ENCODE measurements at regions of chr10 and their contacts with region 1.

Region 1: GRCh38 chr10:80699602-80700039 is 161.9 kb downstream of the SH2D4B start:
- DNase-seq: peak; percentile 38 to 54 (median 41)
- H3K4me3 ChIP-seq: no peak overlapping the region
- H3K4me3 Mint-ChIP-seq: no peak overlapping the region
- H3K27ac ChIP-seq: no peak overlapping the region
- H3K27ac Mint-ChIP-seq: no peak overlapping the region
- H3K4me1 ChIP-seq: no peaks in the 10 kb centered on the region
- H3K4me1 Mint-ChIP-seq: peaks cover 0 to 5% (median 0%) of the 10 kb centered on the region in 4 donors
- H3K27me3 ChIP-seq: no peaks in the 10 kb centered on the region
- H3K27me3 Mint-ChIP-seq: peaks cover 2 to 3% of the 10 kb centered on the region in 2 donors

Region 2: DNA sequence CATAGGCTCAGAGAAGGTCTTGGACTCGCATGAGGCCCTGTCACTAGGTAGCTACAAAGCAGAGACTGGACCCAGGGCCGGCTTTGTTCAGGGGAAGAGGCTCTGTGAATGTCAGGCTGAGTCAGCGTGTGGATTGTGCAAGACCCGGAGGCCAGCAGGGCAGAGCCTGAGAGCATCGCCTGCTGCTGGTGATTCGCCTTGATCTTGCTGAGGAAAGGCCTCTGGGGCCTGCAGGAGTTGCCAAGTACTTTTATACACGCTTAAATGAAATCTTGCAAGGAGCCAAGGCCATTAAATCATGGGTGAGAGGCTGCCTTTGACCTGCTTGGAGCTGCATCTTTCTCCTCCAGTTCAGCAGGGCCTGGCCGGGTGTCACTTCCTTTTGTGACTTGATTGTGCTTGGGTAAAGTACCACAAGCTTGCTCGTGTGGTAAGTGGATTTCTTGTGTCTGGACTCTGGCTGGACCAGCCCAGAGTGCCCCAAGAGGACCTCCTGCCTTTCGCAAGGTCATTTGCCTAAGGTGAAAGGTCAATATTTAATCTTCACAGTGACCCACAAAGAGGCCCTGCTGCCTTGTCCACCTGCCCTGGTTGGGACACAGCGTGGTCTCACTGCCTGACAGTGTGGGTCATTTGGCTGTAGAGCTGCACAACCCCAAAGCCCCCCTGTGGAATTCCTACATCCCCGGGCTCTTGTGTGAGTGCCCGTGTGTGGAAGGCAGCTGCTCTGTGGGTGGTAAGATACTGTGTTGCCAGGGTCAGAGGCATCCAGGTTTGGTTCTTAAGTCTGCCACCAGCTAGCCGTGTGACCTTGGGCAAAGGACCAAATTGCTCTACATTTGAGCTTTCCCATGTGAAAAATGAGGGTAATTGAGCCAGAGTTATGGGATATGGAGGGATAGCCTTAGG is 200.5 kb before region 1 on chr10:
- CTCF ChIA-PET with region 1: no interaction called
- POLR2A ChIA-PET with region 1: no interaction called
- intact Hi-C with region 1: no loop called
- DNase-seq: peak in 1 of 5 donors; percentile 74
- H3K4me3 ChIP-seq: peak overlapping the region; percentile 1 to 22
- H3K4me3 Mint-ChIP-seq: peak overlapping the region; percentile 48 to 92 (median 81)
- H3K27ac ChIP-seq: peak overlapping the region; percentile 62
- H3K27ac Mint-ChIP-seq: peak overlapping the region; percentile 83 to 97 (median 95)
- H3K4me1 ChIP-seq: peaks cover 100% of the 10 kb centered on the region
- H3K4me1 Mint-ChIP-seq: peaks cover 90 to 100% (median 95%) of the 10 kb centered on the region in 4 donors
- H3K27me3 ChIP-seq: no peaks in the 10 kb centered on the region
- H3K27me3 Mint-ChIP-seq: no peaks in the 10 kb centered on the region

Region 3: DNA sequence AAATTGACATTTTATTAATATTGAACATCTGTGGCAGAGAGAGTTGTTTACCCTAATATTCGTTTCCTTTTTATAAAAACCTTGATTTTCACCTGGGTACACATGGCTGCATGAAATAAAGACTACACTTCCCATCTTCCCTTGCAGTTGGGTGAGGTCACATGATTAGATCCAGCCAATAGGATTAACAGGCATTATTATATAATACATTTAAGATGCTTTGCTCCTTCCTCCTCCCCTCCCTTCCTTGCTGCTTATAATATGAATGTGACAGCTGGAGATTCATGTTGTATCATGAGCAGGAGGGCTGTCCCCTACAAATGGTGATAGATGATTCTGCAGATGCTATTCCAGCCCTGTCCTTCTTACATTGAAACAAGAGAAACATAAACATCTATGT is 15.4 kb before region 1 on chr10:
- CTCF ChIA-PET with region 1: interaction called, 10 read pairs
- POLR2A ChIA-PET with region 1: no interaction called
- intact Hi-C with region 1: no loop called
- DNase-seq: peak; percentile 42 to 58 (median 51)
- H3K4me3 ChIP-seq: no peak overlapping the region
- H3K4me3 Mint-ChIP-seq: no peak overlapping the region
- H3K27ac ChIP-seq: no peak overlapping the region
- H3K27ac Mint-ChIP-seq: no peak overlapping the region
- H3K4me1 ChIP-seq: no peaks in the 10 kb centered on the region
- H3K4me1 Mint-ChIP-seq: peaks cover 0 to 1% (median 0%) of the 10 kb centered on the region in 4 donors
- H3K27me3 ChIP-seq: no peaks in the 10 kb centered on the region
- H3K27me3 Mint-ChIP-seq: peaks cover 0 to 1% of the 10 kb centered on the region in 2 donors

Region 4: DNA sequence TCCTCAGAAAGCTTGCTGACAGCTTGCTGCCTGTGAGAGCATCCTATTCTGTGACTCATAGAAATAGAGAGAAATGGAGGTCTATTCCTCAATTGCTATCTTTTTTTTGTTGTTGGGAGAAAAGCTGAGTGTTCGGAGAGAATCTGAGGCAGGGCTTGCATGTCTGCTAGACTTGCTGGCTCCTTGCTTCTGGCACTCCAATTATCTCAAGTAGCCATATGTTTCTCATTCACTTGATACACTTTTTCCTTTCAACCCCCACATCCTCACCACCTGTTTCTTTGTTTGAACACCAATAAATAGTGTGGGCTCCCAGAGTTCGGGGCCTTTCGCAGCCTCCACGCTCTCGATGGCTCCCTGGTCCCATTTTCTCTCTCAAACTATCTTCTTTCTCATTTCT is 10.2 kb after region 1 on chr10:
- CTCF ChIA-PET with region 1: interaction called, 11 read pairs
- POLR2A ChIA-PET with region 1: no interaction called
- intact Hi-C with region 1: no loop called
- DNase-seq: no peak
- H3K4me3 ChIP-seq: no peak overlapping the region
- H3K4me3 Mint-ChIP-seq: no peak overlapping the region
- H3K27ac ChIP-seq: no peak overlapping the region
- H3K27ac Mint-ChIP-seq: no peak overlapping the region
- H3K4me1 ChIP-seq: no peaks in the 10 kb centered on the region
- H3K4me1 Mint-ChIP-seq: peaks cover 0 to 1% (median 0%) of the 10 kb centered on the region in 4 donors
- H3K27me3 ChIP-seq: no peaks in the 10 kb centered on the region
- H3K27me3 Mint-ChIP-seq: peaks cover 6 to 7% of the 10 kb centered on the region in 2 donors

Measured in CD4-positive, alpha-beta memory T cell (primary cell).